Activated CD4-positive, alpha-beta T cell treated with anti-CD3 and anti-CD28 coated beads, Interleukin-2, amount 10 ng/mL, durations not matched to agents 24 days and 14 days (primary cell): ENCODE measurements at regions of chr3 and their contacts with region 1.

Region 1: DNA sequence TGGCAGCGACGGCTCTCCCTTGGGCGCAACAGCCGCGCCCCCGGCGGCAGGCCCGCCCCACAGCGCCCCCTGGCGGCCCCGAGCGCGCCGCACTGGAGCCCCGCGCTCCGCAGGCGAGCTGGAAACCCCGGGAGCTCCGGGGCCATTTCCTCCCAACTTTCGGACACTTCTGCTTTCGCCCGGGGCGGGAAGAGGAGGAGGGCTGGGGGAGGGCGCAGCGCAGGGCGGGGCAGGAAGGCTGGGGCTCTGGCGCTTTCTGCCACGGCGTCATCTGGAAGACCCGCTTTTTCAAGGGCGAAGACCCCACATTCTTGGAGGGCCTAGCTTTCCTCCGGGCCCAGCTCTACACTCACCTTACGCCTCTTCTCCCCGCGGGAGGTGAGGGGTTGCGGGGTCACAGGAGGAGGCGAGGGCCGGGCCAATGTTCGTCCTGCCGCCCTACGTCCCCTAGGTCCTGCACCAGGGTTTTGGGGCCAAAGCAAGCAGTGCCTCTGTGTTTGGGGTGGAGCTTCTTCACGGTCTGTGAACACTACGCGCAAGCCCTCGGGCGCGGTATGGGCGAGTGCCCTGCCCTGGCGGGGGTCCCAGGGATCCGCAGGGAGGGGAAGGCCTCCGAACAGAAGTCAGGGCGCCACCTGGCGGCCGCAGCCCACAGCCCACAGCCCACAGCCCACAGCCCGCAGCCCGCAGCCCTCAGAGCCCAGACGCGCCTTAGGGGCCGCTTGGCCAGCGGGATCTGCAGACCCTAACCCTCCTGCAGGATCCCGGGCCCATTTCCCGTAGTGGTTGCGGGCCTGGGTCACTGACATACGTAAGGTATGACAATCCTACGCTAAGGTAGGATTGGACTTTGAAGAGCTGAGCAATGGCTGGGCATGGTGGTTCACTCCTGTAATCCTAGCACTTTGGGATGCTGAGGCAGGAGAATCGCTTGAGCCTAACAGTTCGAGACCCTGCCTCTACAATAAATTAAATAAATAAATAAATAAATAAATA is 31.1 kb downstream of the FOXL2 start:
- DNase-seq: peak; percentile 94
- H3K4me3 Mint-ChIP-seq: peak overlapping the region; percentile 88
- H3K27ac Mint-ChIP-seq: peak overlapping the region; percentile 76
- H3K4me1 Mint-ChIP-seq: peaks cover 6% of the 10 kb centered on the region
- H3K27me3 Mint-ChIP-seq: peaks cover 17% of the 10 kb centered on the region

Region 2: GRCh38 chr3:138329127-138329983 is 586.4 kb before region 1 on chr3 and contains the start of gene NME9:
- intact Hi-C with region 1: loop called (anchors 10 kb)
- DNase-seq: peak; percentile 96
- H3K4me3 Mint-ChIP-seq: peak within 1 kb of the TSS; percentile 91
- H3K27ac Mint-ChIP-seq: peak within 1 kb of the TSS; percentile 89
- H3K4me1 Mint-ChIP-seq: peaks cover 23% of the 10 kb centered on the region
- H3K27me3 Mint-ChIP-seq: no peaks in the 10 kb centered on the region
- total RNA-seq, gene NME9: not detected in 2 replicates

Region 3: DNA sequence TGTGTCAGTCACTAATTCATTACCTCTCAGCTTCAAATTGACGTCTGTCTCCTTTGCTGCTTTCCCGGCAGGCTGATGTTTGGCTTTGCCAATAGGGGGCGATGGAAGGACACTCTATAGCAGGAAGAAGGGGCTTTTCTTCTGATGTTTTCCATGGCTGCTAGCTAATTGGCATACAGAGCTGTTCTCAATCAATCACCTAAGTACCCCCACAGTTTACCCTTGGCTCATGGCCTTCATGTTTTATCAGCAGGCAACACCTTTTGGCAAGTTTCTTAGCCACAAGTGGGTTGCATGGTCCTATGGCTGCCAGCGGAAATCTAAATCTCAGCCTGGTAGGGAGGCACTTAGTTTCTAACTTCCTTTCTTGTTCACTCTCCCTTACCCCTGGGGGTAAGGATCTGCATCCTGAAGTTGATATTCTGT is 436.4 kb before region 1 on chr3:
- intact Hi-C with region 1: loop called (anchors 2 kb)
- DNase-seq: peak; percentile 79
- H3K4me3 Mint-ChIP-seq: no peak overlapping the region
- H3K27ac Mint-ChIP-seq: no peak overlapping the region
- H3K4me1 Mint-ChIP-seq: no peaks in the 10 kb centered on the region
- H3K27me3 Mint-ChIP-seq: peaks cover 14% of the 10 kb centered on the region

Region 4: DNA sequence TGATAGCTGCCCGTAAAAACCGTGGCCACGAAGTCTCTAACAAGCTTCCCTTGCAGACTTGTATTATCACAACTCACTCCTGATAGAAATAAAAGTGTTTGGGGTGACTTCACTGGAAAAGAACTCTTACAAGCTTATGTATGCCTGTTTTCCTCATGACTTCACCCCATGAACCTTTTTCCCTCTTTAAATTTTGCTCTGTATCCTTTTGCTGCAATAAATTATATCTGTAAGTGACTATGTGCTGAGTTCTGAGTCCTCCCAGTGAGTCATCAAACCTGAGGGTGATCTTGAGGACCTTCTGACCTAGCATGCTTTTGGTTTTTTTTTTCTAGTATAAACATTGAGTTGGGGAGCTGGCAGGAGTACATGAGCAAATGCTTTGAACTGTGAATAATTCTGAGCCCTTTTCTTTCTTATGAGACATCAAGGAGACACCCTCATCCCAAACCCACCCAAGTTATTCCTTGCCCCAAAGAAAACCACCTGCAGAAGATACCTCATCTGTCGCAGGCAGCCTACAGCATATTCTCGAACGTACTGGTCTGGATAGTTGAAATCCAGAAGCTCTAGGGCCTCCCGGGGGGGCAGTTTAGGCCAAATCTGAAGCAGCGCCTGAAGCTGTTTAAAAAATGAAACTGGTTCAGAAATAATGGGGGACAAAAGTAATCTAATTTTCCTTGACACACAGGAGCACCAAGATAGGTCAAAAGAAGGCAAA is 221.4 kb before region 1 on chr3:
- intact Hi-C with region 1: loop called (anchors 1 kb)
- DNase-seq: no peak
- H3K4me3 Mint-ChIP-seq: no peak overlapping the region
- H3K27ac Mint-ChIP-seq: no peak overlapping the region
- H3K4me1 Mint-ChIP-seq: no peaks in the 10 kb centered on the region
- H3K27me3 Mint-ChIP-seq: no peaks in the 10 kb centered on the region

Region 5: GRCh38 chr3:138774529-138775253 is 141.1 kb before region 1 on chr3:
- intact Hi-C with region 1: loop called (anchors 10 kb)
- DNase-seq: peak; percentile 60
- H3K4me3 Mint-ChIP-seq: no peak overlapping the region
- H3K27ac Mint-ChIP-seq: no peak overlapping the region
- H3K4me1 Mint-ChIP-seq: peaks cover 25% of the 10 kb centered on the region
- H3K27me3 Mint-ChIP-seq: no peaks in the 10 kb centered on the region